ENCODE measurements at regions of chr5 and their contacts with region 1.

Region 1: DNA sequence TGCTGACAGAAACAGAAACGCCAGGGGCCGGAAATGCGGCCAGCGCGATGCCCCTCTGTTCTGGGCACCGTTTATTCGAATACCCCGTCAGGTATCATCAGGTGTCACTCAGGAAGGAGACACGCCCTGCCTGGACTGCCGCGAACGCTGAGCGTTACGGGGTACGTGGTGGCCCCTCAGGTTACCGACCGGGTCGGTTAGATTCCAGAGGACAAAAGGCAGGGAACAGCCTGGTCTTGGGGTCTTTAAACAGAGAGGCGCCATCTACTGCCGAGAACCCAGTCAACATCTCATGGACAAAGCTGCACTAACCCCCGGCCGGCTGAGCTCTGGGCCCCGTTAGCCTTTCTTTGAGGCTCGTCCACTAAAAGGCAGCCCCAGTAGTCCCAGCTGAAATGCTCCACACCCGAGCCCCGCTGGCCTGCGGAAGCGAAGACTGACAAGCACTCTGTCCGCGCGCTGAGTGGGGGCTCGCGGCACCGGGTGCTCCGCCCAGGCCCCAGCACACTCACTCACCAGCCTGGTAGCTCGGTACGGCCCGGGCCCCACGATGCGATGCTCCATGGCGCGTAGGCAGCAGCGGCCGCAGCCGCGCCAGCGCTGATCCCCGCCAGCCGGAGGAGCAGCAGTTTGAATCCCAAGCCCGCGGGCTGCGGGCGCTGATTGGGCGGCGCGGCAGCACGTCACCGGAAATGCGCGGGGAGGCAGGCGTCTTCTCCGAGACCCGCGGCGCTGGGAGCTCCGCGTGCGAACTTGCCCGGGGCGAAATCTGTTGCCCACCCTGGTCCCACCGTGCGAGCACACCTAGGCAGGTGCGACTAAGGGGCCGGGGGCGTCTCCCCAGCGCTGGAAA is at the start of gene DEPDC1B:
- DNase-seq: peak; percentile 93
- total RNA-seq, gene DEPDC1B: not detected

Region 2: GRCh38 chr5:60604771-60605170 is 95.0 kb before region 1 on chr5:
- intact Hi-C with region 1: no loop called
- DNase-seq: no peak

Region 3: DNA sequence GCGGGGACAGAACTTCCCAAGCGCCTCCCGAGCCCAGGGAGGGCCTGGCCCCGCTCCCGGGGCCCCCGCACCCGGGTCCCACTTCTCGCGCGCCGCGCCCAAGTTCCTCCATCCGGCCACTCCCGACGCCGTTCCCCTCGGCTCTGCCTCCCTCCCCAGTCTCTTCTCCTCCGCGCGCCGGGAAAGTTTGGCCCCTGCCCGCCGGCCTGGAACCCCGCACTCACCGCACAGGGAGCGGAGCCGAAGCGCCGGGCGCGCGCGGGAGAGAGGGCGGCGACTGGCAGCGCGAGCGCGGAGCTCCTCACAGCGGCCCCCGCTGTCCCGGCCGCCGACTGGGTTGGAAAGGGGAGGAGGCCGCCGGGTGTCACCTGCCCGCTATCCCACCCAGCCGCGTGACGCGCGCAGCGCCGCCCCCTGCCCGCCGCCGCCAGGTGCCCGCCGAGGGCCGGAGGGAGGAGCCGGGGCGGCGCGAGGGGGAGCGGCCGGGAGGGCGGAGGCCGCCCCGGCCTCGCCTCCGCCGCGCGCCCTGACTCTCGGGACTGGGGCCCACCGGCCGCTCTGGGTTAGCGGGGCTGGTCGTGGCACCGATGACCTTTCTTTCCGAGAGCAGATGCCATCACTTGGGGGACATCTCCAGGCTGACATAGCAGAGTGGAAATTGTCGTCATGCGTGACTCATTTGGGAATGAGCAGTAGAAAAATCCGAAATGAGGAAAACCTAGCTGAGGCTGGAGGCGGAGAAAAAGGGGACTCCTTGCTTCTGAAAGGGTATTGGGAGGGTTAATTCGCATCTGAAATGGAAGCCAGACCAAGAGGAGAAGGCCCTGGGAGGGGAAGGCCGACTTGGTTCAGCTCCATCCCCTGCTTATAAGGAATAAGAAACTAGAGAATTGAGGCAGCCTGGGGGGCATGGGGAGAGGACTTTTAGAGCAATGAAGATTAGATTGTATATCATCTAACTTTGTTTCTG is 144.5 kb after region 1 on chr5 and contains the start of gene ELOVL7:
- intact Hi-C with region 1: loop called (anchors 10 kb)
- DNase-seq: no peak
- total RNA-seq, gene ELOVL7: 0.97 TPM

Region 4: DNA sequence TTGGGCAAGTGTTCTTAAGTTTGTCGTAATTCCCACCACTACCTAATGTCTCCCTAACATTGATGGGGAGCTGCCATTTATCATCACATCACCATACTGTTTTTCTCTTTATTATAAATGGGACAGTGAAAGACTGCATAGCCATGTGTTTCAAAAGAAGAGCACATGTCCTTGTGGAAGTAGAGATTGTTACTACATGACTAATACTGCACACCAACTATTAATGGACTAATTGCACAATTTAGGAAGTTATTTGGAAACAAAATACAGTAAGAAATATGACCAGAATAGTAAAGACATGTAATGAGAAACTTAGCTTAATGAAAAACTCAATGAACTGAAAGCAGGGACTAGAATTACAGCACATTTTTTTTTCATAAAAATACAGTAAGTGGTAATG is 156.3 kb after region 1 on chr5:
- intact Hi-C with region 1: no loop called
- DNase-seq: no peak

Region 5: DNA sequence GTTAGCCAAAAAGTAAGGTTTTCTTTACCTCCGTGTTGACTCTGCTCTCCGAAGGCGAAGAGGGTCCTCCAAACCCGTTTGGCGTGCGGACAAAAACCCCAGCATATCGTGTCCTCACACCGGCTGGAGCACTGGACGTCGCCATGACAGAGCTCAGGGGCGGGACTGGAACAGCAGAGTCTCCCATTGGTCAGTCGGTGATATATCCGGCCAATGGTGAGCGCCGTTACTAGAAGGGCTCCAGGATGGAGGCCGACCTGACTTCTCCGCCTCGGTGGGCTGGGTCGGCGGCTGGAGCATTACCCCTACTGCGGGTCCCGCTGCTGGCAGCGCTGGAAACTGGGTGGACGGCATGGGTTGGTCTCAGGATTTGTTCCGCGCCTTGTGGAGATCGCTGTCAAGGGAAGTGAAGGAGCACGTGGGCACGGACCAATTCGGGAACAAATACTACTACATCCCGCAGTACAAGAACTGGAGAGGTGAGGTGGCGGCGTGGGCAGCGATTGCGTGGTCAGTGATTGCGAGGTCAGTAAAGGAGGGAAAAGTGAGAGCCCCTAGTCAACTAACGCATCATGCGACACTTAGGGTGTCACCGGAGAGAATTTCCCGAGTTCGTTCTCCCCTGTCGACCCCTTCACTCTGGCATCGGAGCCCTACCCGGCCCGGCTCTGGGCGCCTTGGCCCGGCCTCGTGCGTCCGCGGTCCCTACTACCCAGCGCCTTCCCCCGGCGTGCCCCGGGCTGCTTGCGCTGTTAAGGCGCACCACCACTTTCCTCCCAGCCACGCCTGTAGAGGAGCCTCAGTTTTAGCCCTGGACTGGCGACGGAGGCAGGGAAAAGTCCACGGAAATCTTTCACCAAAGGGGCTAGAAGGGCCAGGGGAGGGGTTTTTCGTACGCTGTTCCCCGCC is 245.4 kb after region 1 on chr5 and contains the starts of genes ERCC8 and NDUFAF2:
- intact Hi-C with region 1: loop called (anchors 10 kb)
- DNase-seq: peak; percentile 97
- total RNA-seq, gene ERCC8: 4.6 TPM
- total RNA-seq, gene NDUFAF2: 27.1 TPM